SK-N-SH (cell line): ENCODE measurements at regions of chr13 and their contacts with region 1.

Region 1: GRCh38 chr13:46010148-46010547 is 42.4 kb downstream of the ZC3H13 start:
- DNase-seq: peak; percentile 12
- H3K4me3 ChIP-seq: no peak overlapping the region; a peak in 1 of 4 replicates
- H3K27ac ChIP-seq: no peak overlapping the region
- H3K4me1 ChIP-seq: peaks cover 0 to 6% of the 10 kb centered on the region in 2 experiments; a peak in 1 of 4 replicates
- H3K27me3 ChIP-seq: no peaks in the 10 kb centered on the region
- CTCF ChIP-seq: peak; percentile 59
- EP300 ChIP-seq: no peak
- RAD21 ChIP-seq: peak; percentile 53

Region 2: GRCh38 chr13:45994752-45995151 is 15.4 kb before region 1 on chr13:
- CTCF ChIA-PET with region 1: interaction called, 13 read pairs
- POLR2A ChIA-PET with region 1: no interaction called
- DNase-seq: no peak
- H3K4me3 ChIP-seq: no peak overlapping the region
- H3K27ac ChIP-seq: no peak overlapping the region
- H3K4me1 ChIP-seq: no peaks in the 10 kb centered on the region; a peak in 2 of 4 replicates
- H3K27me3 ChIP-seq: no peaks in the 10 kb centered on the region
- CTCF ChIP-seq: no peak
- EP300 ChIP-seq: no peak
- RAD21 ChIP-seq: no peak